ENCODE measurements at regions of chr1 and their contacts with region 1.

Region 1: DNA sequence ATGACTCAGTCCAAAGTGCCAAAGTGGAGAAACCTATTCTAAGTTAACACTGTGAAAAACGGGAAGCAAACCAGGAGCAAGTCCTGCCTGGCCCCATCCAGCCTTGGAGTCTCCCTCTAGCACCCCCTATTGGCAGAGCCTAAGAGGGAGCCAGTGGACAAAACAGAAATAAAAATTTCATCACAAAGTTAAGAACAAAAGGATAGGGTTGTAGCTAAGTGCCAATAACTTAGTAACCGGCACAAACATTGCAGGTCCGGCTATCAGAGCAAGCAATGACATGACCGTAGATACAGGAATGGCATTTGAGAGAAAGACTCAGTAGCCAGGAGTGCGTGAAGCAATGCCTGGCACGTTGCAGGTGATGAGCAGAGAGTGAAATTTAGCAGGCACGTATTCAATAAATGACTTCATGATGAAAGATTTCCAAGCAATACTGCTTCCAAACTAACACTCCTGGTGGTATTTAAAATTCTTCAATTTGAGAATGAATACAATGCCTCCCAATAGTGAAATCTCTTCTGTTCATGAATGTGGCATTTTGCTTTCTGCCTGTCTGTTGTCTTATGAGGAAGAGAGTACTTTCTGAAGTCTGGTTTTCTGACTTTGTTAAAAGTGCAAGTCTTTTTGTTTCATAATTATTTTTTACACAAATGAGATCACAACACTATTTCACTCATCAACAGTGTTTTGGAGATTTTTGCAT is 391.0 kb downstream of the OMA1 start:
- DNase-seq: no peak
- ATAC-seq: no peak
- H3K4me3 Mint-ChIP-seq: no peak overlapping the region
- H3K27ac Mint-ChIP-seq: no peak overlapping the region
- H3K4me1 Mint-ChIP-seq: peaks cover 3% of the 10 kb centered on the region
- H3K27me3 Mint-ChIP-seq: no peaks in the 10 kb centered on the region
- CTCF ChIP-seq: no peak

Region 2: DNA sequence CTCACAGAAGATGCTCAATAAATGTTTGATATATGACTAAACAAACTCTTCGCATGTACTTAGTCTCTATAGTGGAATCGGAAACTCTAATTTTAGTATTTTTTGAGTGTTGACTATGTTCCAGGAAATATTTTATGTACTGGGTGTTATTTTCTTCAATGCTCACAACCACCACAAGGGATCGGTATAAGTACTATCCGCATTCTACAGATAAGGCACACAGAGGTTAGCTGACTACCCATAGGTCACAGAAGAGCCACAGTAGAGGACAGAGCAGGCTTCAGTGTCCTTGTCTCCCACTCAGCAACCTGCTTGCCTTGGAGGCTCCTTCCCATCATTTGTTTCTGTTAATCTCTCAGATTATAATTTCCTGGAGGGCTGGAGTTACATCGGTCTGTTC is 60.4 kb before region 1 on chr1:
- CTCF ChIA-PET with region 1: no interaction called
- POLR2A ChIA-PET with region 1: no interaction called
- intact Hi-C with region 1: loop called (anchors 5 kb)
- DNase-seq: no peak
- ATAC-seq: no peak
- H3K4me3 Mint-ChIP-seq: no peak overlapping the region
- H3K27ac Mint-ChIP-seq: no peak overlapping the region
- H3K4me1 Mint-ChIP-seq: no peaks in the 10 kb centered on the region
- H3K27me3 Mint-ChIP-seq: no peaks in the 10 kb centered on the region
- CTCF ChIP-seq: no peak

Region 3: DNA sequence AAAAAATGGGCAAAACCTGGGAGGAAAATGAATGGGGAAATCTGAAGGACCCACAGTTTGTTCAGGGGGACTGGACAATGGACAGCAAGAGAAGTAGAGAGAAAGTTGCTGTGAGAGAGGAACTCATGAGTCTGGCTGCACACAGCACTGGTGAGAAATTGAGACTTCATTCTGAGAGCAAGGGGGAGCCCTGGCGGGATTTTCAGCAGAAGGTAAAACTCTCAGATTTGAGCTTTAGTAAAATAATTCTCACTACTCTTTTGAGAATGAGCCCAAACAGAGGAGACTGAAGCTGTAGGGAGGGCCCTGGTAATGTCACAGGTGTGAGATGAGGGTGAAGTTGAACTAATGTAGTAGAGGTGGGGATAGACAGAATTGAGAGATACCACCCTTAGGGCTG is 47.6 kb before region 1 on chr1:
- CTCF ChIA-PET with region 1: no interaction called
- POLR2A ChIA-PET with region 1: no interaction called
- intact Hi-C with region 1: no loop called
- DNase-seq: no peak
- ATAC-seq: no peak
- H3K4me3 Mint-ChIP-seq: no peak overlapping the region
- H3K27ac Mint-ChIP-seq: no peak overlapping the region
- H3K4me1 Mint-ChIP-seq: peaks cover 3% of the 10 kb centered on the region
- H3K27me3 Mint-ChIP-seq: no peaks in the 10 kb centered on the region
- CTCF ChIP-seq: no peak

Region 4: GRCh38 chr1:58119971-58120370 is 35.6 kb before region 1 on chr1:
- CTCF ChIA-PET with region 1: no interaction called
- POLR2A ChIA-PET with region 1: no interaction called
- intact Hi-C with region 1: no loop called
- DNase-seq: no peak
- ATAC-seq: no peak
- H3K4me3 Mint-ChIP-seq: no peak overlapping the region
- H3K27ac Mint-ChIP-seq: no peak overlapping the region
- H3K4me1 Mint-ChIP-seq: no peaks in the 10 kb centered on the region
- H3K27me3 Mint-ChIP-seq: no peaks in the 10 kb centered on the region
- CTCF ChIP-seq: no peak

Region 5: DNA sequence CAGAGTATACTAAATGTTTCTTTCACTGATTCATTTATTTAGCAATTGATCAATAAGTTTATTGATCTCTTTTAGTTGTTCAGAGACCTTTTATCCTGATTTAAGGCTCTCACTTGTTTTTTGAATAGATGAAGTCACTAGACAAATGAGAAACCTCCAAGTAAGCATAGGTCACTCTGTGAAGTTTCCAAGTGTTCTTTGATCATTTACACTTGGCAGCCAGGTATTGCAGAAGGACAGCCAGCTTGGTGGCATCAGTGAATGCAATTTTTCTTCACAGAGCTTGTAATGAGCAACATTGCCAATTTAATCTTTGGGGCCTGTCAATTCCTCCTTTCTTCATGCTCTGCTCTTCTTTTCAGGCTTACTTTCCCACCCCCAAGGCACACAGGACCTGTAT is 22.0 kb before region 1 on chr1:
- CTCF ChIA-PET with region 1: no interaction called
- POLR2A ChIA-PET with region 1: no interaction called
- intact Hi-C with region 1: no loop called
- DNase-seq: no peak
- ATAC-seq: no peak
- H3K4me3 Mint-ChIP-seq: no peak overlapping the region
- H3K27ac Mint-ChIP-seq: no peak overlapping the region
- H3K4me1 Mint-ChIP-seq: no peaks in the 10 kb centered on the region
- H3K27me3 Mint-ChIP-seq: no peaks in the 10 kb centered on the region
- CTCF ChIP-seq: no peak